ENCODE measurements at regions of chr22 and their contacts with region 1.

Region 1: GRCh38 chr22:23042179-23042578 is 28.1 kb upstream of the GNAZ start:
- DNase-seq: peak; percentile 84
- ATAC-seq: peak; percentile 86
- H3K4me3 ChIP-seq: no peak overlapping the region
- H3K27ac ChIP-seq: peak overlapping the region; percentile 40
- H3K4me1 ChIP-seq: peaks cover 21% of the 10 kb centered on the region
- H3K27me3 ChIP-seq: no peaks in the 10 kb centered on the region
- CTCF ChIP-seq: no peak

Region 2: DNA sequence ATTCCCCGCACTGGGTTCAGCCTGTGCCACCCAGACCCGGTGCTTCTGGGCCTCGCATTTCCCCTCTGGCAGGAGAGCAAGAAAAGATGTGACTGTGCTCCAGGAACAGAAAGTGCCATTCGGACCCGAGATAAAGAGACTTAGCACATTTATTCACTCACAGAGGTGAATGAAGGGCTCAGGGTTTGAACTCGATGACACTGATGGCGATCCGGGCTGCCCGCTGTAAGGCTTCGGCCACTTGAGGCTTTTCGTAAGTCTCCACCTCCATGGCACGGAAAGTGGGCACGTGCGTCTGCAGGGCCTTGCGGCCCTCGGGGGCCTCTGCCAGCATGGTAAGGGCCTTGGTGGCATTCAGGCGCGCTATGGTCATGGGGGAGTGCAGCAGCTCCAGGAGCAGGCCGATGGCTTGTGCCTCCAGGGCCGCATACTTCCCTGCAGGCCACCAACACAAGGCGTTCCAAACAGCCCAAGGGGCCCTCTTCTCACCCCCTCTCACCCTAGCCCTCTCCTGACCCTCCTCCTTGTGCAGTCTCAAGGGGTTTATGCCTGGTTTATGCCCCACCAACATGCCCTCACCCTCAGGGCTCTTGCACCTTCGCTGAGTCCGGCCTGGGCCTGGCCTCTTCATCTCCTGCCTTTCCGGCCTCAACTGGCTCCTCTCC is 17.2 kb after region 1 on chr22:
- CTCF ChIA-PET with region 1: no interaction called
- POLR2A ChIA-PET with region 1: no interaction called
- intact Hi-C with region 1: no loop called
- DNase-seq: no peak
- ATAC-seq: no peak
- H3K4me3 ChIP-seq: no peak overlapping the region
- H3K27ac ChIP-seq: no peak overlapping the region
- H3K4me1 ChIP-seq: peaks cover 7% of the 10 kb centered on the region; the same call in 1 of the 2 replicates
- H3K27me3 ChIP-seq: no peaks in the 10 kb centered on the region
- CTCF ChIP-seq: no peak

Region 3: GRCh38 chr22:23069502-23070357 is 27.6 kb after region 1 on chr22:
- CTCF ChIA-PET with region 1: no interaction called
- POLR2A ChIA-PET with region 1: no interaction called
- intact Hi-C with region 1: loop called (anchors 1 kb)
- DNase-seq: peak; percentile 82
- ATAC-seq: peak; percentile 95
- H3K4me3 ChIP-seq: peak overlapping the region; percentile 84
- H3K27ac ChIP-seq: no peak overlapping the region
- H3K4me1 ChIP-seq: peaks cover 12% of the 10 kb centered on the region; the same call in 1 of the 2 replicates
- H3K27me3 ChIP-seq: no peaks in the 10 kb centered on the region
- CTCF ChIP-seq: no peak

Measured in PC-3 (cell line).